ENCODE measurements at regions of chr14 and their contacts with region 1.

Region 1: DNA sequence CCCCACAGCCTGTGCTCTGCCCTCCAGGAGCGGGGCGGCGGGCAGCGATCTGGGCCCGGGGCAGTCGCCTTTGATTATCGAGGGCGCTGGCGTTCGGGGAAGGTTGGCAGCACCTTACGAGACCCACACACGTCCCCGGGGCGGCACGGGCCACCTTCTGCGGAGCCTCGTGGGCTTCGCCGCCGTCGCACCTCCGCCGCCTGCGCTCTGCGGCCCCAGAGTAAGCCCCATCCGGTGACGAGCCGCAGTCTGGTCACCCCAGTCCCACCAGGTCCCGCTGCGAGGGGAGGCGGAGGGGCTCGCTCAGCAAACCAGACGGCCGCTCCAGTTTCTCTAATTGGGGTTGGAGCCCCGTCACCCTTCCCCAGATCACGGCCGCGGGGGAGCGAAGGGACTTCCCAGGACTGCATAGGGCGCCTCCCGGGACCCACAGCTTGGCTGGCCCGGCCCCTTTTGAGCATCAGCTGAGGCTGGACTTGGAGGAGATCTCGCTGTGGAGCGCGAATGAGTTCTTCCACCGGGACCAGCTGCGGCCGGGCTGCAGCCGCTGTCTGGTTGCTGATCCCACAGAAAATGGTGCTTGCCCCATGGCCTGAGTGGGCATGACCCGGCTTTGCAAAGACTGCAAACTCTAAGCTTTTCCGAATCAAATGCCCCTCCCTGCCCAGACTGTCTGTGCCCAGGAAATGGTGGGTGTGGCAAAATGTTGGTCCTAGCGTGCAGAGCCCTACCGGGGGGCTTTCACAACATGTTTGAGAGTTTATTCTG is 560 bp downstream of the LGALS3 start:
- DNase-seq: peak; percentile 81
- H3K4me3 ChIP-seq: peak overlapping the region; percentile 75 to 79
- H3K27ac ChIP-seq: peak overlapping the region; percentile 55 to 73; a peak in 3 of 4 replicates
- H3K4me1 ChIP-seq: peaks cover 8 to 9% of the 10 kb centered on the region in 2 experiments; a peak in 2 of 4 replicates
- H3K27me3 ChIP-seq: no peaks in the 10 kb centered on the region
- CTCF ChIP-seq: no peak
- EP300 ChIP-seq: no peak
- RAD21 ChIP-seq: no peak

Region 2: DNA sequence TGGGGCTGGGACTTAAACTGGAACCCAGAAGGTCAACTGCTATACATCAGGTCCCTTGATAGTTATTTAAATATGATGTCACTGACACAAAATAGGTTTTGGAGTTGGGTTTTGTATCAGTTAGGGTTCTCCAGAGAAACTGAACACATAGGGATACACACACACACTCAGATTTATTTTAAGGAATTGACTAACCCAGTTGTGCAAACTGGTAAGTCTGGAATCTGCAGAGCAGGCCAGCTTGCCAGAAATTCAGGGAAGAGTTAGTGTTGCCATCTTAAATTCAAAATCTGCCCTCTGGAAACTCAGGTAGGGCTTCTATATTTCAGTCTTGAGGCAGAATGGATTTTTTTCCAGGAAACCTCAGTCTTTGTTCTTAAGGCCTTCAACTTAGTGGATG is 41.3 kb before region 1 on chr14:
- CTCF ChIA-PET with region 1: interaction called, 15 read pairs
- POLR2A ChIA-PET with region 1: no interaction called
- DNase-seq: no peak
- H3K4me3 ChIP-seq: no peak overlapping the region
- H3K27ac ChIP-seq: no peak overlapping the region
- H3K4me1 ChIP-seq: peaks cover 7 to 20% of the 10 kb centered on the region in 2 experiments; a peak in 3 of 4 replicates
- H3K27me3 ChIP-seq: no peaks in the 10 kb centered on the region
- CTCF ChIP-seq: no peak
- EP300 ChIP-seq: no peak
- RAD21 ChIP-seq: no peak

Region 3: DNA sequence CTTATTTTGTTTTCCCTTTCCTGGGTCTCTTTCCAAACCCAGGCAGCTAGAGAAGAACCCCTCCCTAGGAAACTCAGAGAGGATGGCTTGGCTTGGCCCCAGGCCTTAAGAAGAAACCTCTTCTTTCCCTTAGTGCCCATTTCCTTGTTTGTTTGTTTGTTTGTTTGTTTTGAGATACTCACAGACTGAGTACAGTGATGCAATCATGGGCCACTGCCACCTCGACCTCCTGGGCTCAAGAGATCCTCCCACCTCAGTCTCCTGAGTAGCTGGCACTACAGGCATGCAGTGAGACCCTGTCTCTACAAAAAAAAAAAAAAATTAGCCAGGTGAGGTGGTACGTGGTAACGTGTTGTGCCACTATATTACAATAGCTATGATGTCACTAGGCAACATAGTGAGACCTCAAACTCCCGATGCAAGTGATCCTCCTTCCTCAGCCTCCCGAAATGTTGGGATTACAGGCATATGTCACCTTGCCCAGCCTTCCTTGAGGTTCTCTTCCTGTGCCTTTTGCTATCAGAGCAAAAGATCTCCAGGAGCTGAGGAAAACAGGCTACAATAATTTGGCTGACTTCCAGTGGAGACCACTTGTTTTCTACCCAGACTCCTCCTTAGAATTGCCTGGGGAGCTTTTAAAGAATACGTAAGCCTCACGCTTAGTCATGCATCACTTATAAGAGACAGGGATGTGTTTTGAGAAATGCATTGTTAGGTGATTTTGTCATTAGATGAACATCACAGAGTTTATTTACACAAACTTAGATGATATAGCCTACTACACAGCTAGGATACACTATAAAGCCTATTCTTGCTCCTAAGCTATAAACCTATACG is 35.1 kb before region 1 on chr14:
- CTCF ChIA-PET with region 1: interaction called, 15 read pairs
- POLR2A ChIA-PET with region 1: no interaction called
- DNase-seq: no peak
- H3K4me3 ChIP-seq: no peak overlapping the region
- H3K27ac ChIP-seq: no peak overlapping the region; a peak in 1 of 4 replicates
- H3K4me1 ChIP-seq: peaks cover 7 to 26% of the 10 kb centered on the region in 2 experiments
- H3K27me3 ChIP-seq: no peaks in the 10 kb centered on the region
- CTCF ChIP-seq: no peak
- EP300 ChIP-seq: no peak
- RAD21 ChIP-seq: no peak